Caco-2 (cell line): ENCODE measurements at regions of chr20 and their contacts with region 1.

Region 1: DNA sequence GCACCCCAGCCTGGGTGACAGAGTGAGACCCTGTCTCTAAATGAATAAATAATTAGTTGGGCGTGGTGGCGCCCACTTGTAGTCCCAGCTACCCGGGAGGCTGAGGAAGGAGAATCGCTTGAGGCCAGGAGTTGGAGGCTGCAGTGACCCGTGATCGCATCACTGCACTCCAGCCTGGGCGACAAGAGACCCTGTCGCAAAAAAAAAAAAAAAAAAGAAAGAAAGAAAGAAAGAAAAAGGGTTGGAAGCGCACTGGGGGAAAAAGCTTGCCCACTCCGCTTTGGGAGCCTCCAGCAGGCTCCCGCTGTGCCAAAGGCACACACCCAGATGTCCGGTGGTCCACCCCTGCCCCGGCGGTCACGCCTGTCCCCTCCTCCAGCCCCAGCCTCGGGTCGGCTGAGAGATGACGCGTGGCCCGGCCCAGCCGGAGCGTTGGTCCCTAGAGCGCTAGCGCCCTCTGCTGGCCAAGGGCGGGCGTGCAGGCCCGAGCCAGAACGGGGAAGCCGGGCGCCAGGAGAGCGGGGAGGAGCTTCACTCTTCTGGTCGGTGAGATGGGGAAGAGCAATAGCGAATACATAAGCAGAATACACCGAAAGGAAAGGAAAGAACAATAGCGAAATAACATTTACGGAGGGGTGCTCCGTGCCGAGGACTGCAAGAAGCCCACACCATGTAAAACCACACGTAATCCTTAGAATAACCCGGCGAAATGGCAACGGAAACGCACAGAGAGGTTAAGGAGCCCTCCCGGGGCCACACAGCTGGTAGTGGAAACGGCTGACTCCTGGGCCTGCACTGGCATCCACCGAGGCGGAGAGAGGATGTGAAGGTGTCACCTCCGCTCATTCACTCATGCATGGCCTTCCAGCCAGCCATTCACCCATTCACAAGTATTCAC is 41.7 kb downstream of the UBE2V1 start:
- DNase-seq: peak; percentile 94 to 100
- H3K4me3 ChIP-seq: peak overlapping the region; percentile 50
- H3K4me3 Mint-ChIP-seq: peak overlapping the region; percentile 77
- H3K27ac Mint-ChIP-seq: peak overlapping the region; percentile 20
- H3K4me1 ChIP-seq: peaks cover 13% of the 10 kb centered on the region
- H3K4me1 Mint-ChIP-seq: peaks cover 9% of the 10 kb centered on the region
- H3K27me3 ChIP-seq: no peaks in the 10 kb centered on the region
- H3K27me3 Mint-ChIP-seq: no peaks in the 10 kb centered on the region
- CTCF ChIP-seq: peak; percentile 100

Region 2: GRCh38 chr20:49936153-49937027 is 134.8 kb before region 1 on chr20 and contains the start of gene RNF114:
- CTCF ChIA-PET with region 1: interaction called, 13 read pairs
- POLR2A ChIA-PET with region 1: interaction called, 4 read pairs
- intact Hi-C with region 1: no loop called
- DNase-seq: peak; percentile 94 to 98
- H3K4me3 ChIP-seq: peak within 1 kb of the TSS; percentile 87
- H3K4me3 Mint-ChIP-seq: peak within 1 kb of the TSS; percentile 93
- H3K27ac Mint-ChIP-seq: peak within 1 kb of the TSS; percentile 91
- H3K4me1 ChIP-seq: peaks cover 32% of the 10 kb centered on the region
- H3K4me1 Mint-ChIP-seq: peaks cover 38% of the 10 kb centered on the region
- H3K27me3 ChIP-seq: no peaks in the 10 kb centered on the region
- H3K27me3 Mint-ChIP-seq: no peaks in the 10 kb centered on the region
- CTCF ChIP-seq: peak in 1 of 2 experiments; percentile 11
- total RNA-seq, gene RNF114: 146 and 154 TPM in 2 replicates

Region 3: DNA sequence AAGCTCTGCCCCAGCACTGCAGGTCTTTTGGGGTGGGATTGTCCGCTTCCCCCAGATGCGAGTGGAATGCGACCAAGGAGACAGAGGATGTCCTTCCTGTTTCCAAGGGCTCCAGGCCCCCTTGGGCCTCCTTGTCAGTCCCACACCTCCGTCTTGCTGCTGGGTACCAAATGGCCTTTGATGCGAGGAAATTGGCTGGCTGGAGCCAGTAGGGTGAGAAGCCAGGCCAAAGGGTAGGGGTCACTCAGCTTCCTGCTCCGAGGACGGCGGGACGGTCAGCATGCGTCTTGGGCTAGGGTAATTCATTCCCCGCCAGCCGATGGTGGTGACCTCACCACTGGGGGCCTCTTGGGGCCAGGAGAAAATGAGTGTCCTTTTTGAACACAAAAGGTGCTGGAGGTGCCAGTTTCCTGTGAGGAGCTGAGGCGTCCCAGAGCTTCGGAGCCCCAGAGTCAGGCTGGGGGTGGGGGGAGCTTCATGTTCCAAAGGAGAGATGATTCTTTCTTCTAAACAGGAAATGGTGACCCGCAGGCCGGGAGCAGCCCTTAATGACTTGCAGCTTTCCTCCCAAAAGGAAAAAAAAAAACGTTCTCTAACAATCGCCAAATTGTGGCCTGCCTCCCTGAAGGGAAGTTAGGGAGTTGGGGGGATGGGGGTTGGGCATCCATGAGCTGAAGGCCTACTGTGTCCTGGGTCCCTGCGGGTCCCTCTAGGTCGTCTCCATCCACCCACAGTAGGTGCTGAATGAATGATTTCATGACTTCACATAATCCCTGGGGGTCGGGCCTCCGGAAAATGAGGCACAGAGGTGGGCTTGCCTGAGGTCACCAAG is 81.8 kb before region 1 on chr20:
- CTCF ChIA-PET with region 1: interaction called, 433 read pairs
- POLR2A ChIA-PET with region 1: interaction called, 3 read pairs
- intact Hi-C with region 1: no loop called
- DNase-seq: no peak
- H3K4me3 ChIP-seq: no peak overlapping the region
- H3K4me3 Mint-ChIP-seq: no peak overlapping the region
- H3K27ac Mint-ChIP-seq: no peak overlapping the region
- H3K4me1 ChIP-seq: peaks cover 10% of the 10 kb centered on the region; the same call in 1 of the 2 replicates
- H3K4me1 Mint-ChIP-seq: peaks cover 11% of the 10 kb centered on the region
- H3K27me3 ChIP-seq: no peaks in the 10 kb centered on the region
- H3K27me3 Mint-ChIP-seq: no peaks in the 10 kb centered on the region
- CTCF ChIP-seq: no peak

Region 4: GRCh38 chr20:50038574-50039012 is 32.6 kb before region 1 on chr20:
- CTCF ChIA-PET with region 1: interaction called, 30 read pairs
- POLR2A ChIA-PET with region 1: no interaction called
- intact Hi-C with region 1: no loop called
- DNase-seq: peak; percentile 85 to 90
- H3K4me3 ChIP-seq: no peak overlapping the region
- H3K4me3 Mint-ChIP-seq: no peak overlapping the region
- H3K27ac Mint-ChIP-seq: peak overlapping the region; percentile 51
- H3K4me1 ChIP-seq: peaks cover 52% of the 10 kb centered on the region
- H3K4me1 Mint-ChIP-seq: peaks cover 37% of the 10 kb centered on the region
- H3K27me3 ChIP-seq: no peaks in the 10 kb centered on the region
- H3K27me3 Mint-ChIP-seq: no peaks in the 10 kb centered on the region
- CTCF ChIP-seq: no peak

Region 5: DNA sequence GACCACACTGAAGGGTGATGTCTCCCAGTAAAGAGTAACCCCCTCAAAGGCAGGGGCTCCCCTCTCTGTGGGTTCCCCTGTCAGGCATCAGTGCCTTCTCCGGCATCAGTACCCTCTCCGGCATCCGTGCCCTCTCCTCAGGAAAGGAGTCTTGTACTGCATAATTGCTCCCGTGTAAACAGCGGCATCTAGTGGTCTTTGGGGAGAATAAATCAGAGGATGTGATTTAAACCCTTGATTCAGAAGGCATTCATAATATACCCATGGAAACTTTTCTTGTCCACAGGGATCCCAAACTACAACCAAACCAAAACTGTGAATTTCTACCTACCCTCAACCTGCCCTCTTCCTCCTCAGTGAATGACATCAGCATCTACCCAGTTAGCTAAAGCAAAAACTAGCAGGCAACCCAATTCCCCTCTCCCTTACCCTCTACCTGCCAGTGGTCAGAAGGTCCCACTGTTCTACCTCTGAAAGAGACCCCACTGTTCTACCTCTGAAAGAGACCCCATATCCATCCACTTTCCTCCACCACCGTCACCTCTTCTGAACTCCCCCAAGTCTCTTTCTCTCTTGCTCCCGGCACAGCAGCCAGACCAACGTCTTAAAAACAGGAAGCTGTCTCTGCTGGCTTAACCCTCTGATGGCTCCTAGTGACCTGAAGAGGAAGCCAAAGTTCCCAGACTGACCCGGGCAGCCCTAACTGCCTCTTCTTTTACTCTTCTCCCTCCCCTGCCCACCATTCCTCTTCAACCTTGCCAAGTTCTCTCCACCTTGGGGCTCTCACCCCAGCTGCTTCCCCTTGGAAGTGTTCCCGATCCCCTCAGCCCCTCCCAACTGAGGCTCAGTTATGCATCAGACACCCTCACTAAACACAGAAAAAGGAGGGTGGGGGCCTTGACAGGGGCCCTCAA is 14.5 kb after region 1 on chr20:
- CTCF ChIA-PET with region 1: interaction called, 18 read pairs
- POLR2A ChIA-PET with region 1: no interaction called
- intact Hi-C with region 1: loop called (anchors 1 kb)
- DNase-seq: peak; percentile 74 to 80
- H3K4me3 ChIP-seq: no peak overlapping the region
- H3K4me3 Mint-ChIP-seq: no peak overlapping the region
- H3K27ac Mint-ChIP-seq: no peak overlapping the region
- H3K4me1 ChIP-seq: peaks cover 8% of the 10 kb centered on the region; the same call in 1 of the 2 replicates
- H3K4me1 Mint-ChIP-seq: peaks cover 24% of the 10 kb centered on the region
- H3K27me3 ChIP-seq: no peaks in the 10 kb centered on the region
- H3K27me3 Mint-ChIP-seq: no peaks in the 10 kb centered on the region
- CTCF ChIP-seq: peak; percentile 95 to 96

Region 6: GRCh38 chr20:50153485-50154377 is 82.5 kb after region 1 on chr20 and contains the start of gene PEDS1:
- CTCF ChIA-PET with region 1: interaction called, 13 read pairs
- POLR2A ChIA-PET with region 1: interaction called, 3 read pairs
- intact Hi-C with region 1: loop called (anchors 1 kb)
- DNase-seq: peak; percentile 95 to 99
- H3K4me3 ChIP-seq: peak within 1 kb of the TSS; percentile 96
- H3K4me3 Mint-ChIP-seq: peak within 1 kb of the TSS; percentile 82
- H3K27ac Mint-ChIP-seq: peak within 1 kb of the TSS; percentile 91
- H3K4me1 ChIP-seq: peaks cover 32% of the 10 kb centered on the region
- H3K4me1 Mint-ChIP-seq: peaks cover 45% of the 10 kb centered on the region
- H3K27me3 ChIP-seq: no peaks in the 10 kb centered on the region
- H3K27me3 Mint-ChIP-seq: no peaks in the 10 kb centered on the region
- CTCF ChIP-seq: peak; percentile 0 to 5
- total RNA-seq, gene PEDS1: 78.3 and 84.1 TPM in 2 replicates

Region 7: GRCh38 chr20:50208085-50208491 is 136.8 kb after region 1 on chr20:
- CTCF ChIA-PET with region 1: no interaction called
- POLR2A ChIA-PET with region 1: no interaction called
- intact Hi-C with region 1: no loop called
- DNase-seq: no peak
- H3K4me3 ChIP-seq: no peak overlapping the region
- H3K4me3 Mint-ChIP-seq: no peak overlapping the region
- H3K27ac Mint-ChIP-seq: peak overlapping the region; percentile 36
- H3K4me1 ChIP-seq: peaks cover 12% of the 10 kb centered on the region
- H3K4me1 Mint-ChIP-seq: peaks cover 12% of the 10 kb centered on the region
- H3K27me3 ChIP-seq: no peaks in the 10 kb centered on the region
- H3K27me3 Mint-ChIP-seq: no peaks in the 10 kb centered on the region
- CTCF ChIP-seq: no peak

Region 8: DNA sequence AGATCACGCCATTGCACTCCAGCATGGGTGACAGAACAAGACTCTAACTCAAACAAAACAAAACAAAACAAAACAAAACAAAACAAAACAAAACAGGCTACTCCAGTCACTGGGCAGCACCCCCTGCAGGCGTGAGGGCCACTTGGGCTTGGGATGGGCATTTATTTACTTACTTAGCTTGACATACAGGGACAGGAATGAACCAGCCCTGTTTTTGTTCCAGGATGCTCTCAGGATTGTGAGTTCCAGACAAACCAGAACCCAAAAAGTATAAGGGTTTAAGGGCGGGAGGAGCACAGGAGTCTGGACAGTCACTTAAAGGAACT is 435.0 kb after region 1 on chr20:
- CTCF ChIA-PET with region 1: no interaction called
- POLR2A ChIA-PET with region 1: no interaction called
- intact Hi-C with region 1: no loop called
- DNase-seq: no peak
- H3K4me3 ChIP-seq: no peak overlapping the region
- H3K4me3 Mint-ChIP-seq: no peak overlapping the region
- H3K27ac Mint-ChIP-seq: no peak overlapping the region
- H3K4me1 ChIP-seq: peaks cover 17% of the 10 kb centered on the region
- H3K4me1 Mint-ChIP-seq: peaks cover 5% of the 10 kb centered on the region
- H3K27me3 ChIP-seq: no peaks in the 10 kb centered on the region
- H3K27me3 Mint-ChIP-seq: no peaks in the 10 kb centered on the region
- CTCF ChIP-seq: peak in 1 of 2 experiments; percentile 26